ENCODE measurements at regions of chr17 and their contacts with region 1.

Region 1: GRCh38 chr17:44006598-44007345 is 2.4 kb downstream of the NAGS start:
- DNase-seq: peak; percentile 99
- ATAC-seq: peak; percentile 94

Region 2: GRCh38 chr17:44044067-44044466 is 37.3 kb after region 1 on chr17:
- intact Hi-C with region 1: loop called (anchors 5 kb)
- DNase-seq: no peak
- ATAC-seq: no peak

Region 3: DNA sequence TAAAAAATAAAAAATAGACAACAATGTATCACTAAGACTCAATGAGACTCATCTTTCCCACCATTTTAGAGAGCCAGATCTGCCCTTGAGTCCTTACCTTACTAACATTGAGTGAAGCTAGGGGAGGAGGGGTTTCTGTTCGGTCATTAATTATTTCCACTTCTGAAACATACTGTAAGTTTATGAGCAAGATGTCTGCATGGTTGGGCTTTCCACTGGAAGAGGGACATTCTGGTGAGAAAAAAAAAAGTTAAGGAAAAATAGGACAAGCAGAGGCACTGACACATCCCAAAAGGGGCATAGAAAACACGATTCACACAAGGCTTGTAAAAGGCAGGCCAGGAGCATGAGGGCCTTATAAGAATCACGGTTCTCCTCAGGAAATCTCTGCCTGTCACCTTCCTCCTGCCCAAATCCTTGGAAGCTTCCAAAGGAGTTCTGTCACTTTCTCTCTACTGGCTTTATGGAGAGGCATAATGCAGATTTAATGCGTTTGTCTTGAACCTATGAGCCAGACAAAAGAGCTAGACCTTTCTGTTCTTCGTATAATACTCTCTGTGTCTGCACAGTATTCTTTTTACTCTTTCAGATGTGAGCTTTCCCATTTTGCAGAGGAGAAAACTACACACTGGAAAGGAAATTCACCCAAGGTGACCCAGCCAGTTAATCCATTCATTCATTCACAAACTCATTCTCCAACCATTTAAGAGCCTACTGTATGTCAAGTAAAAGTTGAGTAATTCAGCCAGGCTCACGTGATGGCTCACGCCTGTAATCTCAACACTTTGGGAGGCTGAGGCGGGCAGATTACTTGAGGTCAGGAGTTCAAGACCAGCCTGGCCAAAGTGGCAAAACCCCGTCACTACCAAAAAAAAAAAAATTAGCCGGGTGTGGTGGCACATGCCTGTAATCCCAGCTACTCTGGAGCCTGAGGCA is 57.2 kb after region 1 on chr17:
- intact Hi-C with region 1: loop called (anchors 2 kb)
- DNase-seq: no peak
- ATAC-seq: no peak

Region 4: GRCh38 chr17:44170499-44171201 is 163.9 kb after region 1 on chr17 and contains the start of gene ASB16:
- intact Hi-C with region 1: loop called (anchors 5 kb)
- DNase-seq: no peak
- ATAC-seq: peak; percentile 78
- total RNA-seq, gene ASB16: 14.5 TPM

Region 5: GRCh38 chr17:44218344-44219107 is 211.8 kb after region 1 on chr17:
- intact Hi-C with region 1: no loop called
- DNase-seq: peak; percentile 95
- ATAC-seq: peak; percentile 67